Psoas muscle (tissue), 8 donors: ENCODE measurements at regions of chr19 and their contacts with region 1.

Region 1: GRCh38 chr19:19900729-19901444 is at the start of gene ZNF93:
- DNase-seq: peak; percentile 91 to 93
- ATAC-seq: peak; percentile 98 to 99 (median 99)
- H3K4me3 ChIP-seq: peak within 1 kb of the TSS; percentile 81
- H3K27ac ChIP-seq: peak within 1 kb of the TSS; percentile 80
- H3K4me1 ChIP-seq: no peaks in the 10 kb centered on the region
- H3K27me3 ChIP-seq: no peaks in the 10 kb centered on the region
- CTCF ChIP-seq: no peak
- total RNA-seq, gene ZNF93: 0.69 to 2.3 (median 1.8) TPM

Region 2: GRCh38 chr19:19847781-19848180 is 53.1 kb before region 1 on chr19:
- intact Hi-C with region 1: no loop called
- DNase-seq: no peak
- ATAC-seq: no peak
- H3K4me3 ChIP-seq: no peak overlapping the region
- H3K27ac ChIP-seq: no peak overlapping the region
- H3K4me1 ChIP-seq: no peaks in the 10 kb centered on the region
- H3K27me3 ChIP-seq: no peaks in the 10 kb centered on the region
- CTCF ChIP-seq: no peak

Region 3: GRCh38 chr19:19865739-19866481 is 35.0 kb before region 1 on chr19 and contains the start of gene ZNF253:
- intact Hi-C with region 1: loop called (anchors 5 kb)
- DNase-seq: peak; percentile 98
- ATAC-seq: peak; percentile 97 to 99 (median 99)
- H3K4me3 ChIP-seq: peak within 1 kb of the TSS; percentile 92
- H3K27ac ChIP-seq: peak within 1 kb of the TSS; percentile 95
- H3K4me1 ChIP-seq: peaks cover 35% of the 10 kb centered on the region
- H3K27me3 ChIP-seq: no peaks in the 10 kb centered on the region
- CTCF ChIP-seq: no peak
- total RNA-seq, gene ZNF253: 4.5 to 10.9 (median 6.5) TPM